Transverse colon (tissue), 4 donors: ENCODE measurements at regions of chr20 and their contacts with region 1.

Region 1: DNA sequence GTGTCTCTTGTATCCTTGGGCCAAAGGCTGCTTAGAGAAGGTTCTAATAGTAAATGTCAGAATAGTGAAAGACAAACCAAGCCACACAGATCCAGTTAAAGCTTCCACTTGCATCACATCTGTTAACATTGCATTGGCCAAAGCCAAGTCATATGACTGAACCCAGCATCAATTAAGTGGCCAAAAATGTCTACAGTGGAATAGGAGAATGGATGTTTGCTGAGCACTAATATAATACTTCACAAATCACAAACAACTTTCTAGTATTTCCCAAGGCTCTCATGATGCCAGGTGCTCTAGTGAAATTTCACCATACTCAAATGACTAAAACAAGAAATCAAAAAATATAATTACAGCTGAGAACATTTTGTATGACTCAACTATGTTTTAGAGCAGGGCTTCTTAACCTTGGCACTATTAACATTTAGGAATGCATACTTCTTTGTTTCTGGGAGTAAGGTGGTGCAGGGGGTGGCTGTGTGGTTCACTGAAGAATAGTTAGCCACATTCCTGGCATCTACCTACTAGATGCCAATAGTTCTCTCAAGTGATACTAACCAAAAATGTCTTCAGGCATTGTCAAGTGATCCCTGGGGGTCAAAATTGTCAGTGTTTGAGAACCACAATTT is 148.0 kb upstream of the SPTLC3 start:
- DNase-seq: no peak
- H3K4me3 ChIP-seq: no peak overlapping the region
- H3K27ac ChIP-seq: no peak overlapping the region
- H3K4me1 ChIP-seq: no peaks in the 10 kb centered on the region
- H3K27me3 ChIP-seq: no peaks in the 10 kb centered on the region
- CTCF ChIP-seq: no peak
- EP300 ChIP-seq: no peak
- POLR2A ChIP-seq: no peak

Region 2: GRCh38 chr20:11516448-11516847 is 1344.3 kb before region 1 on chr20:
- in situ Hi-C with region 1: no loop called
- intact Hi-C with region 1: loop called (anchors 5 kb)
- DNase-seq: no peak
- H3K4me3 ChIP-seq: no peak overlapping the region
- H3K27ac ChIP-seq: peak overlapping the region in 1 of 4 donors; percentile 17
- H3K4me1 ChIP-seq: peaks cover 0 to 5% (median 1%) of the 10 kb centered on the region in 4 donors
- H3K27me3 ChIP-seq: no peaks in the 10 kb centered on the region
- CTCF ChIP-seq: no peak
- EP300 ChIP-seq: no peak
- POLR2A ChIP-seq: no peak